Aorta (tissue), 5 donors: ENCODE measurements at regions of chr14 and their contacts with region 1.

Region 1: GRCh38 chr14:69715725-69716477 is 51.0 kb upstream of the SRSF5 start:
- DNase-seq: peak; percentile 83 to 89
- ATAC-seq: peak; percentile 75
- H3K4me3 ChIP-seq: no peak overlapping the region
- H3K27ac ChIP-seq: peak overlapping the region in 1 of 2 donors; percentile 86
- H3K4me1 ChIP-seq: no peaks in the 10 kb centered on the region
- H3K27me3 ChIP-seq: no peaks in the 10 kb centered on the region

Region 2: GRCh38 chr14:69673578-69674305 is 42.2 kb before region 1 on chr14:
- intact Hi-C with region 1: loop called in 1 of 2 experiments (anchors 5 kb)
- DNase-seq: no peak
- ATAC-seq: peak; percentile 39
- H3K4me3 ChIP-seq: no peak overlapping the region
- H3K27ac ChIP-seq: peak overlapping the region in 1 of 2 donors; percentile 76
- H3K4me1 ChIP-seq: peaks cover 7 to 26% of the 10 kb centered on the region in 2 donors
- H3K27me3 ChIP-seq: no peaks in the 10 kb centered on the region